Right ventricle myocardium inferior (tissue), 1 donor: ENCODE measurements at regions of chr4 and their contacts with region 1.

Region 1: GRCh38 chr4:150209140-150209829 is 131.0 kb downstream of the DCLK2 start:
- DNase-seq: no peak
- ATAC-seq: peak; percentile 81

Region 2: GRCh38 chr4:150010525-150011126 is 198.7 kb before region 1 on chr4:
- intact Hi-C with region 1: loop called (anchors 2 kb)
- DNase-seq: no peak
- ATAC-seq: peak; percentile 77

Region 3: DNA sequence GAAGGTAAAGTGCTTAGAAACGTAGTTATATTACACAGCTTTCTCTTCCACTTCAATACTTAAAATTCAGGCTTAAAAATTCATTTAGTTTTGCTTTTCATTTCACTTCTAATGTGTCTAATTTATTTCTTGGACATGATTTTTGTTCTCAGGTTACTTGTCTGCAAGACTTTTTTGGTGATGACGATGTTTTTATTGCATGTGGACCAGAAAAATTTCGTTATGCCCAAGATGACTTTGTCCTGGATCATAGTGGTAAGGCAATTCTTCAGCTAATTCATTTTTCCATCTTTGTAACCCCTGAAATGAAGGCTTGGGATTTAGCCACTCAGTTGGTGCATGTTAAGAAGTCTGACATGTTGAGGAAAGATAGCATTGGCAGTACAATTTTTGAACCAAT is 16.3 kb before region 1 on chr4:
- intact Hi-C with region 1: loop called (anchors 2 kb)
- DNase-seq: no peak
- ATAC-seq: no peak